Heart right ventricle (tissue), 16 donors: ENCODE measurements at regions of chr20 and their contacts with region 1.

Region 1: GRCh38 chr20:50516180-50516934 is 6.2 kb downstream of the PTPN1 start:
- DNase-seq: no peak
- ATAC-seq: no peak
- H3K4me3 ChIP-seq: peak overlapping the region in 1 of 10 donors; percentile 10
- H3K27ac ChIP-seq: peak overlapping the region in 4 of 10 donors; percentile 28 to 98 (median 71)
- H3K4me1 ChIP-seq: peaks cover 3 to 100% (median 91%) of the 10 kb centered on the region in 9 donors
- H3K27me3 ChIP-seq: no peaks in the 10 kb centered on the region
- CTCF ChIP-seq: no peak

Region 2: GRCh38 chr20:49583669-49584417 is 932.5 kb before region 1 on chr20:
- intact Hi-C with region 1: no loop called
- DNase-seq: peak; percentile 73 to 80
- ATAC-seq: peak; percentile 83 to 93 (median 86)
- H3K4me3 ChIP-seq: no peak overlapping the region
- H3K27ac ChIP-seq: peak overlapping the region; percentile 43 to 88 (median 68)
- H3K4me1 ChIP-seq: peaks cover 4 to 45% (median 17%) of the 10 kb centered on the region in 9 donors
- H3K27me3 ChIP-seq: no peaks in the 10 kb centered on the region
- CTCF ChIP-seq: peak in 2 of 9 donors; percentile 12 to 16

Region 3: DNA sequence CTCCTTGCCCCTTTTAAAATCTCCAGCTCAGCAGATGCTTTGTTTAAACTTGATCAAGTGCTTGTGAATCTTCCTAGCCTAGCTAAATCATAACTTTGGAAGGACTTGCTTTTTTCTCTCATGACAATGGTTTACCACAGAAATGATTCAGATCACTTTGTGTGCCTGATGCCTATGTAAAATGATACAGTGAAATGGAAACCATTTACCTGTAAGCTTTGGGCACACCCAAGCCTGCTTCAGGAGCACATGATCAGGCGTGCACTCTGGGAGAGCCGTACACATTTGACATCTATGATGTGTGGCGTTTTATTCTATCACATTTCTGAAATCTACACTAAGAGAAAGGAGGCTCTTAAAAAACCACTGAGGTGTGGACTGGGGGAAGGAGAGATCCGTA is 34.9 kb after region 1 on chr20:
- intact Hi-C with region 1: loop called in 1 of 10 experiments (anchors 5 kb)
- DNase-seq: no peak
- ATAC-seq: no peak
- H3K4me3 ChIP-seq: no peak overlapping the region
- H3K27ac ChIP-seq: no peak overlapping the region
- H3K4me1 ChIP-seq: peaks cover 0 to 63% (median 29%) of the 10 kb centered on the region in 9 donors
- H3K27me3 ChIP-seq: no peaks in the 10 kb centered on the region
- CTCF ChIP-seq: no peak

Region 4: DNA sequence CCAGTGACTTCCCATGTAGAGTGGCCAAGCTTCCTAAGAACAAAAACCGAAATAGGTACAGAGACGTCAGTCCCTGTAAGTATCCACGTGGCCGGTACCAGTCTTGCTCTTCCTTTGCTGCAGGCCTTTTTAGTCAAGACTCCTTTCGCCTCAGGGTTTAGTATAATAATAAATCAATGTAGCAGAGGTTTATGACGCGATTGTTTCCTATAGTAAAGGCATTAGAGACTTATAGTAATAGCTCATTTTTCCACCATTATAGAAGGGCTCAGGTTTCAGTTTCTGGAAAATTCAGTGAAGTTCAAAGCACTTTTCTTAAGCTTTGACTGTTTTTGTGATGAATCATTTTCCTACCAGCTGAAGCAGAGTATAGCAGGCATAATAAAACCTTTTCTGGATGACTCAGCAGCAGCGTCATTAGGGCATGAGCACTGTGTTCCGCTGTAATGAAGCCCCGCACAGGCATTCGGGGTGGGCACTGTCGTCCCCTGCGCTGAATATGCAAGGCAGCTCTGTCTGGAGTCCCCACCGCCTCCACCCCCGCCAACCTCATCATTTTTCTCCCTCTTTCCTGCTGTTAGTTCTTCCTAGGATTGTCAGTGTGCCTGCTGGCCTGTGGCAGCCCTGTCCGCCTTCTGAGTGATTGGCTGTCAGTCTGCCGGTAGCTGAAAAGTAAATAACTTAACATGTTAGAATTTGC is 45.2 kb after region 1 on chr20:
- intact Hi-C with region 1: loop called in 2 of 10 experiments (anchors 5 kb)
- DNase-seq: no peak
- ATAC-seq: no peak
- H3K4me3 ChIP-seq: no peak overlapping the region
- H3K27ac ChIP-seq: peak overlapping the region in 4 of 10 donors; percentile 21 to 62 (median 34)
- H3K4me1 ChIP-seq: peaks cover 0 to 68% (median 38%) of the 10 kb centered on the region in 9 donors
- H3K27me3 ChIP-seq: no peaks in the 10 kb centered on the region
- CTCF ChIP-seq: no peak